ENCODE measurements at regions of chr1 and their contacts with region 1.

Region 1: GRCh38 chr1:92994105-92994712 is 32.9 kb upstream of the DIPK1A start:
- DNase-seq: peak; percentile 40 to 74
- ATAC-seq: peak; percentile 83 to 90
- H3K4me3 ChIP-seq: no peak overlapping the region
- H3K27ac ChIP-seq: no peak overlapping the region
- H3K4me1 ChIP-seq: peaks cover 15% of the 10 kb centered on the region
- CTCF ChIP-seq: peak; percentile 85
- EP300 ChIP-seq: no peak
- POLR2A ChIP-seq: no peak
- RAD21 ChIP-seq: peak; percentile 85

Region 2: GRCh38 chr1:92858564-92859399 is 135.4 kb before region 1 on chr1:
- CTCF ChIA-PET with region 1: interaction called, 76 read pairs
- POLR2A ChIA-PET with region 1: no interaction called
- DNase-seq: peak; percentile 57 to 72
- ATAC-seq: peak; percentile 82 to 88
- H3K4me3 ChIP-seq: no peak overlapping the region
- H3K27ac ChIP-seq: peak overlapping the region in 1 of 2 experiments; percentile 37; a peak in 1 of 6 replicates
- H3K4me1 ChIP-seq: no peaks in the 10 kb centered on the region
- CTCF ChIP-seq: peak; percentile 99
- EP300 ChIP-seq: no peak
- POLR2A ChIP-seq: no peak
- RAD21 ChIP-seq: peak; percentile 95 to 96

Region 3: DNA sequence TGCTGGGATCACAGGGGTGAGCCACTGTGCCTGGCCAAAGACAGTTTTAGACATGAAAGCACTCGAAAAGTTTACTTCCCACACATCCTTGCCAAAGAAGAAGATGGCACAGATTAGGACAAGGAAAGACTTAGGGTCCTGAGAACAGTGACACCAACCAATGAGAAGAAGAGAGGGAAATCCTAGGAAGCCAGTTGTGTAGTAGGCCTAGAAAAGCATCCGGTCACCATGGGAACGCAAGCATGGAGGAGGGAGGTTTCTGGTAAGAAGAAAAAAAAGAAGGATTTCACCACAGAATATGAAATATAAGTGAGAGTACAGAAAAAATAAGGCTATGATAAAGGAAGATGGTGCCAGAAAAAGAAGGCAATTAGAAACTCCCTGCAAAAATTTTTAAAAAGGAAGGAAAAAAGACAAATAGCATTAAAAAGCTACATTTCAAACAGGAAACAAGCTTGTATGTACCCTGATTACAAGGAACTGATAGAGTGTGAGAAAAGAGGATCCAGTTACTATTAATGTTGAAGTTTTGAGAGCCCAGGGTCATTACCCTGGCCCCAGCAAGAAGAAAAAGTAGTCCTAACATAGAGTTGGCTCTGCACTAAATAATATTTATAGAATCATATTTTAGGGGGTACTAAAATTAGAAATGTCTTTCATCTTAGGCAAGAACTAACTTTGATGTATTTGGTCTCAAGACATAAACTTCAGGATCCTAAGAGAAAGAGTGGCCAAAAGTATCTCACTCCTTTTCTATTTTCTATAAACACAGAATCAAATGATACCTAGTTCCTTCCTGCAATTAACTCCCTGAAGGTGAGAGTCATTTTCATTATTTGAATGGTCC is 49.1 kb before region 1 on chr1:
- CTCF ChIA-PET with region 1: interaction called, 10 read pairs
- POLR2A ChIA-PET with region 1: no interaction called
- DNase-seq: no peak
- ATAC-seq: no peak
- H3K4me3 ChIP-seq: no peak overlapping the region
- H3K27ac ChIP-seq: no peak overlapping the region
- H3K4me1 ChIP-seq: peaks cover 13% of the 10 kb centered on the region
- CTCF ChIP-seq: no peak
- EP300 ChIP-seq: no peak
- POLR2A ChIP-seq: no peak
- RAD21 ChIP-seq: no peak

Region 4: GRCh38 chr1:92968138-92969032 is 25.8 kb before region 1 on chr1:
- CTCF ChIA-PET with region 1: interaction called, 69 read pairs
- POLR2A ChIA-PET with region 1: no interaction called
- DNase-seq: peak in 1 of 2 experiments; percentile 12
- ATAC-seq: peak; percentile 43 to 71; a peak in 3 of 6 replicates
- H3K4me3 ChIP-seq: no peak overlapping the region
- H3K27ac ChIP-seq: no peak overlapping the region
- H3K4me1 ChIP-seq: peaks cover 5% of the 10 kb centered on the region; the same call in 2 of the 3 replicates
- CTCF ChIP-seq: peak; percentile 52
- EP300 ChIP-seq: no peak
- POLR2A ChIP-seq: no peak
- RAD21 ChIP-seq: peak; percentile 34 to 41; a peak in 4 of 5 replicates

Region 5: GRCh38 chr1:92980732-92981647 is 13.2 kb before region 1 on chr1:
- CTCF ChIA-PET with region 1: interaction called, 50 read pairs
- POLR2A ChIA-PET with region 1: no interaction called
- DNase-seq: no peak
- ATAC-seq: no peak
- H3K4me3 ChIP-seq: no peak overlapping the region
- H3K27ac ChIP-seq: no peak overlapping the region
- H3K4me1 ChIP-seq: no peaks in the 10 kb centered on the region
- CTCF ChIP-seq: no peak
- EP300 ChIP-seq: no peak
- POLR2A ChIP-seq: no peak
- RAD21 ChIP-seq: no peak

Region 6: GRCh38 chr1:93014168-93014567 is 20.0 kb after region 1 on chr1:
- CTCF ChIA-PET with region 1: interaction called, 15 read pairs
- POLR2A ChIA-PET with region 1: no interaction called
- DNase-seq: no peak
- ATAC-seq: no peak
- H3K4me3 ChIP-seq: no peak overlapping the region
- H3K27ac ChIP-seq: no peak overlapping the region
- H3K4me1 ChIP-seq: peaks cover 14% of the 10 kb centered on the region
- CTCF ChIP-seq: no peak
- EP300 ChIP-seq: no peak
- POLR2A ChIP-seq: no peak
- RAD21 ChIP-seq: no peak

Measured in A549 (cell line).